ENCODE measurements at regions of chr2 and their contacts with region 1.

Region 1: GRCh38 chr2:35410431-35411061 is 945.0 kb upstream of the CRIM1 start:
- DNase-seq: peak; percentile 1
- ATAC-seq: peak; percentile 79
- H3K4me3 ChIP-seq: no peak overlapping the region
- H3K27ac ChIP-seq: no peak overlapping the region
- H3K4me1 ChIP-seq: no peaks in the 10 kb centered on the region
- H3K27me3 ChIP-seq: no peaks in the 10 kb centered on the region
- CTCF ChIP-seq: peak; percentile 66 to 89 (median 82)
- EP300 ChIP-seq: no peak
- POLR2A ChIP-seq: no peak
- RAD21 ChIP-seq: peak; percentile 61

Region 2: DNA sequence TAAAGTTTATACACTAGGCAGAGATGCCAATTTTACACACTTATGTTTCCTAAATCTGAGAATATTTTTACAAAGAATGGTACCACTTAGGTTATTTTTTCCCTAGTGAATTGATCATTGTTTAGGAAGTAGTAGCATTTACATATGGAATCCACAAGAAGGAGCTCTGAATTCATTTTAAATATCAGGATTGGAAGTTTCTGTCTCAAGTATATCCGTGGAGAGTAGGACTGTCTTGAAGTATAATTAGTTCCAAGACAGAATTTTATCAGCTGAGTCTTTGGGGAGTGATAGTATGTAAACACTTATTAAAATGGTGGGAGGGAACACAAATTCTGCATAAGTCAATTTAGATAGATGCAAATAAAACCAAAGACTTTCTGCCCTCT is 1729.2 kb before region 1 on chr2:
- CTCF ChIA-PET with region 1: no interaction called
- POLR2A ChIA-PET with region 1: no interaction called
- RAD21 ChIA-PET with region 1: no interaction called
- SMC1A ChIA-PET with region 1: no interaction called
- in situ Hi-C with region 1: loop called (anchors 25 kb)
- intact Hi-C with region 1: no loop called
- DNase-seq: no peak
- ATAC-seq: no peak
- H3K4me3 ChIP-seq: no peak overlapping the region
- H3K27ac ChIP-seq: no peak overlapping the region
- H3K4me1 ChIP-seq: no peaks in the 10 kb centered on the region
- H3K27me3 ChIP-seq: no peaks in the 10 kb centered on the region
- CTCF ChIP-seq: no peak; a peak in 1 of 6 replicates
- EP300 ChIP-seq: no peak
- POLR2A ChIP-seq: no peak
- RAD21 ChIP-seq: 0 out of 2 replicates have a peak, but pooled peaks have one; percentile 7

Region 3: GRCh38 chr2:34096562-34097171 is 1313.9 kb before region 1 on chr2:
- CTCF ChIA-PET with region 1: interaction called, 29 read pairs
- POLR2A ChIA-PET with region 1: no interaction called
- RAD21 ChIA-PET with region 1: interaction called, 9 read pairs
- SMC1A ChIA-PET with region 1: no interaction called
- in situ Hi-C with region 1: loop called (anchors 5 kb)
- intact Hi-C with region 1: loop called (anchors 1 kb)
- DNase-seq: peak; percentile 24
- ATAC-seq: peak; percentile 88
- H3K4me3 ChIP-seq: no peak overlapping the region
- H3K27ac ChIP-seq: no peak overlapping the region
- H3K4me1 ChIP-seq: no peaks in the 10 kb centered on the region
- H3K27me3 ChIP-seq: no peaks in the 10 kb centered on the region
- CTCF ChIP-seq: peak; percentile 55 to 78 (median 76); a peak in 5 of 6 replicates
- EP300 ChIP-seq: no peak
- POLR2A ChIP-seq: no peak
- RAD21 ChIP-seq: peak; percentile 76

Region 4: DNA sequence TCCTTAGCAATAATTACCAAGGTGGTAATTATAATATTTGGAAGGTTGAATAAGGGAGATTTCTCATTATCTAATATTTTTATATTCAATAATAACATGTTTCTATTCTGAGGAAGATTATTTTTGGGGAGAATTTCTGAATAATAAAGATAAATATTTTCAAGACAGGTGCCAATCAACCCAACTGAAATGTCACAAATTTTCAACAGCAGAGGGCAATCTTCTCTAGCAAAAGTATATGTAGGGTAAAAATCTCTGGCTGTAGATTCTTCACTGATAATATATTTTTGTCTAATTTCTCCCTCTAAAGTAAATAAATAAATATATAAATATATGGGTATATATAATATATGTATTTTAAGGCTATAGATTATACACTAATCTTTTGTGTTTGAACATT is 242.2 kb before region 1 on chr2:
- CTCF ChIA-PET with region 1: interaction called, 17 read pairs
- POLR2A ChIA-PET with region 1: no interaction called
- RAD21 ChIA-PET with region 1: interaction called, 7 read pairs
- SMC1A ChIA-PET with region 1: interaction called, 8 read pairs
- in situ Hi-C with region 1: no loop called
- intact Hi-C with region 1: loop called (anchors 5 kb)
- DNase-seq: no peak
- ATAC-seq: no peak
- H3K4me3 ChIP-seq: no peak overlapping the region
- H3K27ac ChIP-seq: no peak overlapping the region
- H3K4me1 ChIP-seq: no peaks in the 10 kb centered on the region
- H3K27me3 ChIP-seq: no peaks in the 10 kb centered on the region
- CTCF ChIP-seq: no peak; a peak in 1 of 6 replicates
- EP300 ChIP-seq: no peak
- POLR2A ChIP-seq: no peak
- RAD21 ChIP-seq: peak; percentile 21; the same call in 1 of the 2 replicates

Measured in GM12878 (cell line).